CD4-positive, alpha-beta memory T cell (primary cell): ENCODE measurements at regions of chr9 and their contacts with region 1.

Region 1: GRCh38 chr9:121107041-121107440 is 32.3 kb downstream of the CNTRL start:
- DNase-seq: peak in 4 of 5 donors; percentile 37 to 48 (median 42)
- H3K4me3 ChIP-seq: no peak overlapping the region
- H3K4me3 Mint-ChIP-seq: no peak overlapping the region
- H3K27ac ChIP-seq: no peak overlapping the region
- H3K27ac Mint-ChIP-seq: peak overlapping the region in 6 of 7 donors; percentile 9 to 80 (median 44)
- H3K4me1 ChIP-seq: no peaks in the 10 kb centered on the region
- H3K4me1 Mint-ChIP-seq: peaks cover 20 to 37% (median 22%) of the 10 kb centered on the region in 4 donors
- H3K27me3 ChIP-seq: no peaks in the 10 kb centered on the region
- H3K27me3 Mint-ChIP-seq: no peaks in the 10 kb centered on the region

Region 2: DNA sequence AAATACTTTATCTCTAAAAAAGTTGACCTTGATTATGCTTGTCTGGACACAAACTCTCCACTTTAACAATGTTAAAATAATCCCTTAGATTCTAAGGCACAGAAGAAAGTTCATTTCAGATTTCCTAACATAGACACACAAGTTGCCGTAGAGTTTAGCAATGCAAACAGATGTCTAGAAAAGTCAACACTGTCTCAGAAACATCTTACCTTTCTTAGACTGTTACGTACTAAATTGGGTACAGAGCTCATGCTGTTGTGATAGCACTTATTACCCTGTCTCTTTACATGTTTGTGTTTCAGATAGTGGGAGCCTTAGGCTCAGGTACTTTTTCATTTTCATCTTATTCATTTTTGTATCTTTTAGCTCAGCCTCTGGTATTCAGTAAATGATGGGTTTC is 108.9 kb before region 1 on chr9:
- CTCF ChIA-PET with region 1: no interaction called
- POLR2A ChIA-PET with region 1: no interaction called
- intact Hi-C with region 1: no loop called
- DNase-seq: no peak
- H3K4me3 ChIP-seq: no peak overlapping the region
- H3K4me3 Mint-ChIP-seq: no peak overlapping the region
- H3K27ac ChIP-seq: no peak overlapping the region
- H3K27ac Mint-ChIP-seq: no peak overlapping the region
- H3K4me1 ChIP-seq: no peaks in the 10 kb centered on the region
- H3K4me1 Mint-ChIP-seq: no peaks in the 10 kb centered on the region
- H3K27me3 ChIP-seq: no peaks in the 10 kb centered on the region
- H3K27me3 Mint-ChIP-seq: no peaks in the 10 kb centered on the region

Region 3: DNA sequence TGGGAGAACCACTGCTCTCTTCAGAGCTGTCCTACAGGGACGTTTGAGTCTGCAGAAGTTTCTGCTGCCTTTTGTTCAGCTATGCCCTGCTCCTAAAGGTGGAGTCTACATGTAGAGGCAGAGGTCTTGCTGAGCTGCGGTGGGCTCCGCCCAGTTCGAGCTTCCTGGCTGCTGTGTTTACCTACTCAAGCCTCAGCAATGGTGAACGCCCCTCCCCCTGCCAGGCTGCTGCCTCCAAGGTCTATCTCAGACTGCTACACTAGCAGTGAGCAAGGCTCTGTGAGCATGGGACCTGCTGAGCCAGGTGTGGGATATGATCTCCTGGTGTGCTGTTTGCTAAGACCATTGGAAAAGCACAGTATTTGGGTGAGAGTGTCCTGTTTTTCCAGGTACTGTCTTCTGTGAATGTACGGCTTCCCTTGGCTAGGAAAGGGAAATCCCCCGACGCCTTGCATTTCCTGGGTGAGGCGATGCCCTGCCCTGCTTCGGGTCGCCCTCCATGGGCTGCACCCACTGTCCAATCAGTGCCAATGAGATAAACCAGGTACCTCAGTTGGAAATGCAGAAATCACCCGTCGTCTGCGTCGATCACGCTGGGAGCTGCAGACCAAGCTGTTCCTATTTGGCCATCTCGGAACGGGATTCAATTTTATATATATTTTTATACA is 26.2 kb after region 1 on chr9:
- CTCF ChIA-PET with region 1: interaction called, 6 read pairs
- POLR2A ChIA-PET with region 1: interaction called, 4 read pairs
- intact Hi-C with region 1: loop called (anchors 2 kb)
- DNase-seq: peak; percentile 76 to 91 (median 81)
- H3K4me3 ChIP-seq: peak overlapping the region; percentile 21 to 48
- H3K4me3 Mint-ChIP-seq: peak overlapping the region; percentile 68 to 91 (median 77)
- H3K27ac ChIP-seq: peak overlapping the region; percentile 44
- H3K27ac Mint-ChIP-seq: peak overlapping the region; percentile 77 to 96 (median 87)
- H3K4me1 ChIP-seq: peaks cover 45% of the 10 kb centered on the region
- H3K4me1 Mint-ChIP-seq: peaks cover 52 to 79% (median 65%) of the 10 kb centered on the region in 4 donors
- H3K27me3 ChIP-seq: no peaks in the 10 kb centered on the region
- H3K27me3 Mint-ChIP-seq: no peaks in the 10 kb centered on the region

Region 4: GRCh38 chr9:121156263-121156731 is 49.3 kb after region 1 on chr9:
- CTCF ChIA-PET with region 1: interaction called, 3 read pairs
- POLR2A ChIA-PET with region 1: no interaction called
- intact Hi-C with region 1: loop called (anchors 5 kb)
- DNase-seq: peak in 3 of 5 donors; percentile 11 to 39 (median 17)
- H3K4me3 ChIP-seq: no peak overlapping the region
- H3K4me3 Mint-ChIP-seq: peak overlapping the region in 1 of 8 donors; percentile 67
- H3K27ac ChIP-seq: no peak overlapping the region
- H3K27ac Mint-ChIP-seq: peak overlapping the region in 6 of 7 donors; percentile 34 to 79 (median 60)
- H3K4me1 ChIP-seq: peaks cover 13% of the 10 kb centered on the region
- H3K4me1 Mint-ChIP-seq: peaks cover 12 to 27% (median 20%) of the 10 kb centered on the region in 4 donors
- H3K27me3 ChIP-seq: no peaks in the 10 kb centered on the region
- H3K27me3 Mint-ChIP-seq: no peaks in the 10 kb centered on the region

Region 5: GRCh38 chr9:121169094-121169601 is 62.1 kb after region 1 on chr9:
- CTCF ChIA-PET with region 1: no interaction called
- POLR2A ChIA-PET with region 1: no interaction called
- intact Hi-C with region 1: loop called (anchors 2 kb)
- DNase-seq: peak; percentile 21 to 51 (median 28)
- H3K4me3 ChIP-seq: no peak overlapping the region
- H3K4me3 Mint-ChIP-seq: peak overlapping the region in 3 of 8 donors; percentile 24 to 38 (median 25)
- H3K27ac ChIP-seq: peak overlapping the region; percentile 23
- H3K27ac Mint-ChIP-seq: peak overlapping the region; percentile 50 to 90 (median 84)
- H3K4me1 ChIP-seq: peaks cover 17% of the 10 kb centered on the region
- H3K4me1 Mint-ChIP-seq: peaks cover 18 to 26% (median 23%) of the 10 kb centered on the region in 4 donors
- H3K27me3 ChIP-seq: no peaks in the 10 kb centered on the region
- H3K27me3 Mint-ChIP-seq: no peaks in the 10 kb centered on the region